Activated T-helper 2 cell treated with anti-CD3 and anti-CD28 coated beads, Interferon-gamma antibody, Interleukin-2, Interleukin-4, amounts not matched to agents 10 μg/mL and 5 μg/mL and 100 μg/mL, durations not matched to agents 14 hours and 24 hours and 36 hours (primary cell): ENCODE measurements at regions of chr9 and their contacts with region 1.

Region 1: DNA sequence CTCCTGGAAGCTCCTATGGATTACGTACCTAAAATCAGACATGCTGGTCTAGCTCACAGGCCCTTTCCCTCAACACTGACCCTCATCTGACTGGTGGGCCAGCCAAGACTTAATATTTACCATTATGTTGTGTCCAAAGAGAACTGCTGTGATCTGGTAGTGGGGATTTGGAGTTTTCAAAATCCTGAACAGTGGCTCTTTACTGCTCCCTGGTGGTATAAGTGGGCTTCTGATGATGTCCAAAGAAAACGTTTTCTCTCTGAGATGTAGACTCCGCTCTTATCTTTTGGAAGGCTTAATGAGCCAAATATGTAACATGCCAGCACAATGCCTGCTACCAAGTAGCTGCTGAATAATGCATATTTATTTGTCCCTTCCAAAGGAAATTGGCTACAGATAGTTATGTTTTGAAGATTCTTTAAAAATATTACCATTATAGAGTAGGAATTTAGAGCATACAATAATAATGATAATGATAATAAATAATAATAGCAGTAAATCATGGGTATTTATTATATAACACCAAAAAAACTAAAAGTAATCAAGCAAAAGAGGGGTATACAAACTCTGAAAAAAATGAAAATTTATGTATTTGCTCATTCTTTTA is 406.6 kb upstream of the TNC start:
- DNase-seq: no peak
- H3K4me3 Mint-ChIP-seq: no peak overlapping the region
- H3K27ac Mint-ChIP-seq: no peak overlapping the region
- H3K4me1 Mint-ChIP-seq: no peaks in the 10 kb centered on the region
- H3K27me3 Mint-ChIP-seq: no peaks in the 10 kb centered on the region

Region 2: GRCh38 chr9:114405294-114406034 is 1119.1 kb before region 1 on chr9:
- intact Hi-C with region 1: loop called (anchors 10 kb)
- DNase-seq: peak; percentile 71
- H3K4me3 Mint-ChIP-seq: no peak overlapping the region
- H3K27ac Mint-ChIP-seq: no peak overlapping the region
- H3K4me1 Mint-ChIP-seq: peaks cover 6% of the 10 kb centered on the region
- H3K27me3 Mint-ChIP-seq: no peaks in the 10 kb centered on the region

Region 3: DNA sequence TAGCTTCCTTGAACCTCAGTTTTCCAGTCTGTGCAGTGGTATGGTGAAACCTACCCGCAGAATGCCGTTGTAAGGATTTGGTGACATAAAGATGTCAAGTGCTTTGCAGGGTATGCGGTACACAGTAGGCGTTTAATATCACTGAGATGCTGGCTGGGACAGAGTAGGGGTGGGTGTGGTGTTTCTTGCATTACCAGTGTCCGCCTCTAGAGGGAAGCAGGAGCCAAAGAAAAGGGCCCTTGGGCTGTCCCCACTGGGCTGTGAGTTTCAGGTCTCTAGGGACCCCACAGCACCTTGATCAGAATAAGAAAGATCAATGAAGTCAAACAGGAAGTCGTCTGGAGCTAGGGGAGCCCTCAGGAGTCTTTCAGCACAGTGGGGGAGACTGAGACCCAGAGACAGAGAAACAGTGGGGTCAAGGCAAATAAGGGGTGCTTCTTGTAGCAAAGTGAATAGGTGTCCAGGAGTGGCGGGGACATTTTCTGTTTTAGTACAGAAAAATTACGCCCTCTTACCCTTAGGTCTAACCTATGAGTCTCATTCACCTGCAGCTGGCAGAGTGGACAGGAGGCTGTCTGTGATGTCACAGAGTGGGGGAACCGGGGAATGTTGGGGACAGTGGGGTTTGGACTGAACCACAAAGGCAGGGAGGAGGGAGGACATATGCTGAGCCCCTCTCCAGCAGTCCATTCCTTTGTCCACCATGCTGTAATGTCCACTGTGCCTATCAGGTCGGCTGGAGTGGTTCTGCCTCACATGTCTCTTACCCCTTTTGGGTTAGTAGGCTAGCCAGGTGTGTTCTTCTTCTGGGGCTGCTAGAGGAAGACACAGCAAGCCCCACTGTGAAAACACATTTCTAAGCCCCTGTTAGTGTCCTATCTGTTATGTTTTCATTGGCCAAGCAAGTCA is 862.2 kb before region 1 on chr9:
- intact Hi-C with region 1: loop called (anchors 2 kb)
- DNase-seq: peak; percentile 55
- H3K4me3 Mint-ChIP-seq: no peak overlapping the region
- H3K27ac Mint-ChIP-seq: no peak overlapping the region
- H3K4me1 Mint-ChIP-seq: peaks cover 10% of the 10 kb centered on the region
- H3K27me3 Mint-ChIP-seq: peaks cover 15% of the 10 kb centered on the region

Region 4: DNA sequence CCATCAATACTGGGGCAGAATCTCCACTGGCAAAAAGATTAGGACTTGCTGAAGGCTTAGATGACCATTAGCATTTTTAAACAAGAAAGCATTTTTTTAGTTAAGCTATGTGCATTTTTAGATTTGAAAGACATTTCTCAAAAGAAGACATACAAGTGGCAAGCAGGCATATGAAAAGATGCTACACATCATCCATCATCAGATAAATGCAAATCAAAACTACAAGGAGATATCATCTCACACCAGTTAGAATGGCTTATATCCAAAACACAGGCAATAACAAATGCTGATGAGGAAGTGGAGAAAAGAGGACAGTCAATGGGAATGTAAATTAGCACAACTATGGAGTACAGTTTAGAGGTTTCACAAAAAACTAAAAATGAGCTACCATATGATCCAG is 211.0 kb before region 1 on chr9:
- intact Hi-C with region 1: no loop called
- DNase-seq: no peak
- H3K4me3 Mint-ChIP-seq: no peak overlapping the region
- H3K27ac Mint-ChIP-seq: no peak overlapping the region
- H3K4me1 Mint-ChIP-seq: no peaks in the 10 kb centered on the region
- H3K27me3 Mint-ChIP-seq: no peaks in the 10 kb centered on the region

Region 5: GRCh38 chr9:116058456-116058855 is 533.9 kb after region 1 on chr9:
- intact Hi-C with region 1: no loop called
- DNase-seq: no peak
- H3K4me3 Mint-ChIP-seq: no peak overlapping the region
- H3K27ac Mint-ChIP-seq: no peak overlapping the region
- H3K4me1 Mint-ChIP-seq: no peaks in the 10 kb centered on the region
- H3K27me3 Mint-ChIP-seq: no peaks in the 10 kb centered on the region